Panc1 (cell line): ENCODE measurements at regions of chr13 and their contacts with region 1.

Region 1: GRCh38 chr13:79861731-79862130 is 380.8 kb downstream of the NDFIP2 start:
- DNase-seq: no peak
- ATAC-seq: no peak
- H3K4me3 ChIP-seq: no peak overlapping the region
- H3K27ac ChIP-seq: no peak overlapping the region
- H3K4me1 ChIP-seq: no peaks in the 10 kb centered on the region
- H3K27me3 ChIP-seq: no peaks in the 10 kb centered on the region
- CTCF ChIP-seq: no peak

Region 2: GRCh38 chr13:79846386-79846785 is 15.3 kb before region 1 on chr13:
- CTCF ChIA-PET with region 1: no interaction called
- POLR2A ChIA-PET with region 1: no interaction called
- in situ Hi-C with region 1: no loop called
- intact Hi-C with region 1: no loop called
- DNase-seq: no peak
- ATAC-seq: no peak
- H3K4me3 ChIP-seq: no peak overlapping the region
- H3K27ac ChIP-seq: no peak overlapping the region
- H3K4me1 ChIP-seq: no peaks in the 10 kb centered on the region
- H3K27me3 ChIP-seq: no peaks in the 10 kb centered on the region
- CTCF ChIP-seq: no peak

Region 3: GRCh38 chr13:80262051-80262695 is 400.4 kb after region 1 on chr13:
- CTCF ChIA-PET with region 1: interaction called, 16 read pairs
- POLR2A ChIA-PET with region 1: no interaction called
- in situ Hi-C with region 1: no loop called
- intact Hi-C with region 1: no loop called
- DNase-seq: no peak
- ATAC-seq: no peak
- H3K4me3 ChIP-seq: no peak overlapping the region
- H3K27ac ChIP-seq: no peak overlapping the region
- H3K4me1 ChIP-seq: no peaks in the 10 kb centered on the region
- H3K27me3 ChIP-seq: no peaks in the 10 kb centered on the region
- CTCF ChIP-seq: no peak